Keratinocyte (primary cell): ENCODE measurements at regions of chr10 and their contacts with region 1.

Region 1: GRCh38 chr10:90885176-90885575 is 13.4 kb downstream of the RPP30 start:
- DNase-seq: no peak
- H3K4me3 ChIP-seq: no peak overlapping the region
- H3K27ac ChIP-seq: no peak overlapping the region
- H3K4me1 ChIP-seq: no peaks in the 10 kb centered on the region
- H3K27me3 ChIP-seq: no peaks in the 10 kb centered on the region
- CTCF ChIP-seq: no peak

Region 2: GRCh38 chr10:90977162-90977854 is 92.1 kb after region 1 on chr10:
- dilution Hi-C with region 1: no loop called
- DNase-seq: no peak
- H3K4me3 ChIP-seq: no peak overlapping the region
- H3K27ac ChIP-seq: no peak overlapping the region
- H3K4me1 ChIP-seq: no peaks in the 10 kb centered on the region
- H3K27me3 ChIP-seq: no peaks in the 10 kb centered on the region
- CTCF ChIP-seq: no peak

Region 3: GRCh38 chr10:91251430-91252056 is 366.4 kb after region 1 on chr10:
- dilution Hi-C with region 1: loop called (anchors 25 kb)
- DNase-seq: peak; percentile 5
- H3K4me3 ChIP-seq: no peak overlapping the region
- H3K27ac ChIP-seq: no peak overlapping the region
- H3K4me1 ChIP-seq: no peaks in the 10 kb centered on the region
- H3K27me3 ChIP-seq: no peaks in the 10 kb centered on the region
- CTCF ChIP-seq: peak; percentile 69 to 77 (median 70)